ENCODE measurements at regions of chr10 and their contacts with region 1.

Region 1: GRCh38 chr10:86960003-86960862 is 1.8 kb downstream of the SNCG start:
- DNase-seq: peak; percentile 85
- H3K4me3 ChIP-seq: no peak overlapping the region
- H3K27ac ChIP-seq: peak overlapping the region; percentile 78
- H3K4me1 ChIP-seq: peaks cover 45% of the 10 kb centered on the region
- H3K27me3 ChIP-seq: no peaks in the 10 kb centered on the region
- CTCF ChIP-seq: peak; percentile 100
- POLR2A ChIP-seq: no peak

Region 2: GRCh38 chr10:86693721-86694369 is 266.4 kb before region 1 on chr10:
- CTCF ChIA-PET with region 1: interaction called, 16 read pairs
- POLR2A ChIA-PET with region 1: no interaction called
- dilution Hi-C with region 1: no loop called
- intact Hi-C with region 1: no loop called
- DNase-seq: peak; percentile 41
- H3K4me3 ChIP-seq: no peak overlapping the region
- H3K27ac ChIP-seq: no peak overlapping the region
- H3K4me1 ChIP-seq: no peaks in the 10 kb centered on the region
- H3K27me3 ChIP-seq: peaks cover 52 to 53% of the 10 kb centered on the region in 2 experiments
- CTCF ChIP-seq: peak; percentile 70 to 77
- POLR2A ChIP-seq: no peak

Region 3: DNA sequence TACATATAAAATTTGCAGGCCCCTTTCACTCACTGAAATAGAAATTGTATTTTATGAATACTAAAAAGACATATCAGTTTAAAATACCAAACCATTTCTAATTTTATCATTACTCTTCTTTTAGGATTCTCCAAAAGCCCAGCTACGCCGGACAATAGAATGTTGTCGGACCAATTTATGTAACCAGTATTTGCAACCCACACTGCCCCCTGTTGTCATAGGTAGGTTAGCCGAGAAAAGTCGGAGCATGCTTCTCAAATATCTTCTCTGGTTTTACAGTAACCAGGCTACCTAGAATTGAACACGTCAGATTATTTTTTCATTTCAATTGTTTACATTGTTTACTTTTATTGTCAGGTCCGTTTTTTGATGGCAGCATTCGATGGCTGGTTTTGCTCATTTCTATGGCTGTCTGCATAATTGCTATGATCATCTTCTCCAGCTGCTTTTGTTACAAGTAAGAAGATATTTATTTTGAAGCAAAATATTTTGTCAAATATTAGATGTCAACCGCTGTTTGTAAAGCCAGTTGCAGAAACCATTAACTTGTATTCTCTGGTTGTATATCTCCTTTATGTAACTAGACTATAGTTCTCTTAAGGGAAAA is 60.5 kb before region 1 on chr10:
- CTCF ChIA-PET with region 1: interaction called, 11 read pairs
- POLR2A ChIA-PET with region 1: no interaction called
- dilution Hi-C with region 1: no loop called
- intact Hi-C with region 1: no loop called
- DNase-seq: peak; percentile 70
- H3K4me3 ChIP-seq: no peak overlapping the region
- H3K27ac ChIP-seq: no peak overlapping the region
- H3K4me1 ChIP-seq: no peaks in the 10 kb centered on the region
- H3K27me3 ChIP-seq: peaks cover 44 to 67% of the 10 kb centered on the region in 2 experiments
- CTCF ChIP-seq: peak; percentile 59 to 63
- POLR2A ChIP-seq: no peak

Region 4: DNA sequence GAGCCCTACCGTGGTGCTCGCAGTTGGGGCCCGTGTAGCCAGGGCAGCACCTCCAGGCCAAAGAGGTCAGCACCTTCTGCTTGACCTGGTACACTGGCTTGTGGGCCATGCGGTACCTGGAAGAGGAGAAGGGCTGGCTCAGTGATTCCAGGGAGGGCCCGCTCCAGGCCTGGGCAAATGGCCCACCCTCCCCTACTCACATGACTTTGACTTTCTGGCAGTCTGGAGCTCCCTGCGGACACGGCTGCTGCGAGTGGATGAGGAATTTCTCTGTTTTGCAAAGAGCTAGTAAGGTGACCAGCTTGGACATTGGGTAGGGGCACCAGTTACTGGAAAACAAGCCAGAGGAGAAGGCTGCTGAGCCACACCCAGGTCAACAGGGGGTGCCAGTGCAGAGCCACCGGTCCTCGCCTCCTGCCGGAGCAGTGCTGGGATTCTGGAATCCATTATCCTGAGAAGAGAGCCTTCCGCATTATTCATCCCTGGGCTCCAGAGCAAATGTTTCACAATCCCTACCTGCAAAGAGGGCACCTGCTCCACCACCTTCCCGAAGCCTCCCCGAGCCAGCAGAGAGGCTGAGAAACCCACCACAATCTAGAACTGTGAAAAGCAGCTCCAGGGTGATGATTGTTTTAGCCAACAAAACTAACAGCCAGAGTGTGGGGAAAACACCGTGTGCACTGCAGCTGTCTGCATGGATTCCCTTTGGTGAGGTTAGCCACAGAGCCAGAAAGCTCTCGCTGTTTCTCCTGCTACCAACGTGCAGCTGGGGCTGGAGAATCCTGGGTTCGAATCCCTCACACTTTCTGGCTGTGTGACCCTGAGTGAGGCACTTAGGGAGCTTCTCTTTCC is 14.6 kb before region 1 on chr10:
- CTCF ChIA-PET with region 1: interaction called, 325 read pairs
- POLR2A ChIA-PET with region 1: interaction called, 13 read pairs
- dilution Hi-C with region 1: no loop called
- intact Hi-C with region 1: no loop called
- DNase-seq: no peak
- H3K4me3 ChIP-seq: no peak overlapping the region
- H3K27ac ChIP-seq: no peak overlapping the region
- H3K4me1 ChIP-seq: no peaks in the 10 kb centered on the region
- H3K27me3 ChIP-seq: no peaks in the 10 kb centered on the region
- CTCF ChIP-seq: peak; percentile 7 to 16
- POLR2A ChIP-seq: no peak

Region 5: DNA sequence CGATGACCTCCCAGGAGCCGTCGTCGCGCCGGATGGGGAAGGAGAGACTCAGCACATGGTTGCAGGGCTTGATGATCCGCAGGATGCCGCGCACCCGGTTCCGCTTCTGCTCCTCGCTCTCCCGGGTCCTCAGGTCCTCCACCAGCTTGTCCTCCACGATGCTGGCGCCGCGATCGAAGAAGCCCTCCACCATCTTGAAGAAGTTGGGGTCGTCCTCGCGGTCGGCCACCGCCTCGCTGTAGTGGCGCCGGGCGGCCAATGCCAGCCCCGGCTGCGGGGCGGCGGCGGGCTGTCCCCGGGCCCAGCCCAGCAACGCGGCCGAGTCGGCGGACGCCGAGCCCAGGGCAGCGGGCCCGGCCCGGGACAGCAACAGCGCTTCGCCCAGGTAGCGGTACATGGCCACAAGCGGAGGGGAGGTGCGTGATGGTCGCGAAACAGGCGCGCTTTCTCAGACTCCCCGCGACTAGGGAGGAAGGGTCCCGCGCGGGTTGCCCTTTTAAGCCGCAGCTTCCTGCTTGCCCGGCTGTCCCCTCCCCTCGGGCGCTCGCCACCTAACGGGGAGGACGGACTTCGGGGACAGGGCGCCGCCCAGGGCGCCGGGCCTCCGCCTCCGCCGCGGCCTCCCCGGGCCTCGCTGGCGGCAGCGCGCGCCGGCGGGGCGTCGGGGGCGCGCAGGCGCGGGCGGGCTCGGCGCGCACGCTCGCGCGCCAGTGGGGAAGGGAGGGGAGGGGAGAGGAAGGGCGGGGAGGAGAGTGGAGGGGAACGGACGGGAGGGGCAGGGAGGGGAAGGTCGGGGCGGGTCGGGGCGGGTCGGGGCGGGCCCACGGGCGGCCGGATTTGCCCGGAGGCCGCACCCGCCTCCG is 134.4 kb after region 1 on chr10 and contains the starts of genes GLUD1 and SHLD2:
- CTCF ChIA-PET with region 1: interaction called, 4 read pairs
- POLR2A ChIA-PET with region 1: no interaction called
- dilution Hi-C with region 1: no loop called
- intact Hi-C with region 1: loop called (anchors 2 kb)
- DNase-seq: peak; percentile 82
- H3K4me3 ChIP-seq: peak within 1 kb of the TSS; percentile 69 to 95 (median 94)
- H3K27ac ChIP-seq: peak within 1 kb of the TSS; percentile 72
- H3K4me1 ChIP-seq: peaks cover 35% of the 10 kb centered on the region
- H3K27me3 ChIP-seq: no peaks in the 10 kb centered on the region
- CTCF ChIP-seq: no peak
- POLR2A ChIP-seq: peak; percentile 79
- total RNA-seq, gene GLUD1: 86.6 and 94.7 TPM in 2 replicates
- total RNA-seq, gene SHLD2: 19.2 and 22.4 TPM in 2 replicates

Measured in endothelial cell of umbilical vein (primary cell).